H1 (cell line): ENCODE measurements at regions of chr17 and their contacts with region 1.

Region 1: DNA sequence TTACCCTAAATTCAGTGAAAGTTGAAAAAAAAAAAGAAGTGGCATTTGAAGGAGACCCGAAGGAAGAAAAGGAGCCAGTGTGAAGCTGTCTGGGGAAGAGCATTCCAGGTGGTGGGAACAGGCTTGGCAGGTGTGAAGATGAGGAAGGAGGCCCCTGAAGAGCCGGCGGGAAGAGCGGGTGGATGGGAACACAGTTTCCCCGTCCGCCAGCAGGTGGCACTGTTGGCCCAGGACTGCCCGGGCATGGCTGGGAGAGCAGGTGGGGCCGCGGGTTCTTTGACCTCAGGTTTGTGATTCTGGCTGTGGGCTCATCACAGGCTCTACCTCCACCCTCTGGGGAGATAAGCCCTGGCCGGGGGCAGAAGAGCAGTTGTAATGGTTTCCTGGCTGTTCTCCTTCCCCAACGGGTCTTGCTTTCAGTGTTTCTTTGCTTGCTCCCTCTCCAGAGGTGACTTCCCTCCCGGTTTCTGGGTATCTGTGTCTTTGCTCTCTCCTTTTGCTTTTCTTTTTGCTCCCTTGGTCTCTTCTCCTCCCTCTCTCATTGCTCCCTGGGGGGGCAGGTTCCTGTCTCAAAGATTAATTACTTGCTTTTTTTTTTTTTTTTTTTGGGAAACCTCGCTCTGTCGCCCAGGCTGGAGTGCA is 32.3 kb downstream of the RAP1GAP2 start:
- DNase-seq: peak; percentile 81 to 99
- H3K4me3 ChIP-seq: no peak overlapping the region
- H3K27ac ChIP-seq: no peak overlapping the region
- H3K4me1 ChIP-seq: peaks cover 0 to 3% (median 1%) of the 10 kb centered on the region in 4 experiments; a peak in 5 of 7 replicates
- H3K27me3 ChIP-seq: no peaks in the 10 kb centered on the region
- CTCF ChIP-seq: peak; percentile 96 to 98 (median 97)
- EP300 ChIP-seq: peak in 1 of 2 experiments; percentile 60; a peak in 1 of 3 replicates
- POLR2A ChIP-seq: no peak
- RAD21 ChIP-seq: peak; percentile 97 to 98

Region 2: DNA sequence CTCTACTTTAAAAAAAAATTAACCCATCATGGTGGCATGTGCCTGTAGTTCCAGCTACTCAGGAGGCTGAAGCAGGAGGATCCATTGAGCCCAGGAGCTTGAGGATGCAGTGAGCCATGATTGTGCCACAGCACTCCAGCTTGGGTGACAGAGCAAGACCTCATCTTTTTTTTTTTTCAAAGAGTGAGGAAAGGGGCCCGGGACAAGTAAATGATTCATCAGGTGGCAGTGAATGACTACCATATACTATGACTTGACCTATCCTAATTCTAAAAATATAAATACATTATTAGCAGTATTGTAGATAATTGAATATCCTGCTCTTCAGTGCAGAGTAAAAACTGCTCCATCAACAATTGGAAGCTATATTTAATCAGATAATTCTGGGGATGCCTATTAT is 172.2 kb before region 1 on chr17:
- CTCF ChIA-PET with region 1: no interaction called
- POLR2A ChIA-PET with region 1: no interaction called
- DNase-seq: no peak
- H3K4me3 ChIP-seq: no peak overlapping the region
- H3K27ac ChIP-seq: no peak overlapping the region
- H3K4me1 ChIP-seq: no peaks in the 10 kb centered on the region
- H3K27me3 ChIP-seq: no peaks in the 10 kb centered on the region
- CTCF ChIP-seq: no peak
- EP300 ChIP-seq: no peak
- POLR2A ChIP-seq: no peak
- RAD21 ChIP-seq: no peak

Region 3: DNA sequence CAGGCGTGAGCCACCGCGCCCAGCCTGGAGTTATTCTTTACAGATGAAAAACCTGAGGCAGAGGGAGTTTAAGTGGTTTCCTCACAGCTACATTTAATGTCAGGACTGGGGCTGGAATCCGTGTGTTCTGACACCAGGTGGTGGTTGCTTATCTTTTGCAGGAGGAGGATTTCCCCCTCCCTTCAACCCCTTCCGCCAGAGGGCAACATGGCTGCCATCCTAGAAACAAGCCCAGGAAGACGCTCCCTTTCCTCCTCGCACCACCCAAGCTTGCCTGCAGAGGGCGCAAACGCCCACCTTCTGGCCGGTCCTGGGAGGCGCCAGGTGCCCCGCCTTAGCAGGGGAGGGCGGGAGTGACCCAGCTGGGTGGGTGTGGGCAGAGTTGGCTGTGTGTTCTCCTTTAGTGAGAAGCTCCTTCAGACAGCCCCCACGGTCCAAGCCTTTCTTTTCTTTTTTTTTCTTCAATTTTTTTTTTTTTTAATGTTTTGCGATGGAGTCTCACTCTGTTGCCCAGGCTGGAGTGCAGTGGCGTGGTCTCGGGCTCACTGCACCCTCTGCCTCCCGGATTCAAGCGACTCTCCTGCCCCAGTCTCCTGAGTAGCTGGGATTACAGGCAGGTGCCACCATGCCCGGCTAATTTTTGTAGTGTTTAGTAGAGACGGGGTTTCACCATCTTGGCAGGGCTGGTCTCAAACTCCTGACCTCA is 42.2 kb before region 1 on chr17:
- CTCF ChIA-PET with region 1: interaction called, 17 read pairs
- POLR2A ChIA-PET with region 1: no interaction called
- DNase-seq: peak; percentile 92 to 100
- H3K4me3 ChIP-seq: no peak overlapping the region
- H3K27ac ChIP-seq: no peak overlapping the region
- H3K4me1 ChIP-seq: no peaks in the 10 kb centered on the region; a peak in 1 of 7 replicates
- H3K27me3 ChIP-seq: no peaks in the 10 kb centered on the region
- CTCF ChIP-seq: peak; percentile 93 to 99 (median 98)
- EP300 ChIP-seq: no peak; a peak in 1 of 3 replicates
- POLR2A ChIP-seq: no peak
- RAD21 ChIP-seq: peak; percentile 78 to 87

Region 4: GRCh38 chr17:2796164-2797125 is 32.1 kb before region 1 on chr17 and contains the start of gene RAP1GAP2:
- CTCF ChIA-PET with region 1: interaction called, 15 read pairs
- POLR2A ChIA-PET with region 1: no interaction called
- DNase-seq: no peak
- H3K4me3 ChIP-seq: no peak within 1 kb of the TSS
- H3K27ac ChIP-seq: no peak within 1 kb of the TSS
- H3K4me1 ChIP-seq: peaks cover 0 to 8% (median 4%) of the 10 kb centered on the region in 4 experiments; a peak in 4 of 7 replicates
- H3K27me3 ChIP-seq: no peaks in the 10 kb centered on the region
- CTCF ChIP-seq: no peak
- EP300 ChIP-seq: no peak
- POLR2A ChIP-seq: no peak
- RAD21 ChIP-seq: no peak
- total RNA-seq, gene RAP1GAP2: 63.4 and 63.8 TPM in 2 replicates

Region 5: DNA sequence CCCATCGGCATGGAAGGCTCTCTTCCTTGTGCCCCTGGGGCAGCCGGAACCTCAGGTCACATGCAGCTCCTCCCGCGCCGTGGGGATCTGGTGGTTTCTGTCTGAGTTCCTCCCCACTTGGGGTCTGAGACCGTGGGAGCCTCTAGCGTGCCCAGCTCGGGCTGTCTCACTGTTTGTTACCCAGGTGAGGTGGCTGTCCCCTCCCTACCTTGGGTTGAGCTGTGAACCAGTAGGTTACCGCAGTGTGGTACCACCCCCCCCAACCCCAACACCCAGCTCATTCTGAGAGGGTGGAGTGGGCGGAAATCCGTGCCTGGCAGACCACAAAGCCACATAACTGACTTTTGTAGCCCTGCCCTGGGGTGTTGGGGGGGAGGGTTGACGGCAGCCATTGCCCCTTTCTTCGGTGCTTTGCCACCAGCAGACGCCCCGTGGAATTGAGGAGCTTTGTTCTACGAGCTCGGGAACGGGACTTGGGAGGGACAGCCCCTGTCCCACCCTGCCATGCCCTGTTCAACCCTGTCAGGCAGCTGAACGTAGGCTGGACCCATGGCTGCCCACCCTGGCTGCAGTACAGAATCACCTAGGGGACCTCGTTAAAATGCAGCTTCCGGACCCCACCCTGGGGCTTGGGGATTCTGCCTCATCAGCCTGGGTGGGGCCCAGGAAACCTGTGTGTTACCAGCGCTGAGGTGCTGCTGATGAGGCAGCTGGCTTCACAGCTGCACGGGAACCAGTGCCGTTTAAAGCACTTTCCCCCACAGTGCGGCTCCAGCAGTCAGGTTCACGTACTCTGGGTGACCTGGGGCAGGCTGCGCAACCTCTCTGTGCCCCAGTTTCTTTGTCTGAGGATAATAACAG is 13.8 kb before region 1 on chr17:
- CTCF ChIA-PET with region 1: interaction called, 13 read pairs
- POLR2A ChIA-PET with region 1: no interaction called
- DNase-seq: no peak
- H3K4me3 ChIP-seq: no peak overlapping the region
- H3K27ac ChIP-seq: no peak overlapping the region
- H3K4me1 ChIP-seq: peaks cover 0 to 13% (median 4%) of the 10 kb centered on the region in 4 experiments; a peak in 6 of 7 replicates
- H3K27me3 ChIP-seq: no peaks in the 10 kb centered on the region
- CTCF ChIP-seq: no peak
- EP300 ChIP-seq: no peak
- POLR2A ChIP-seq: no peak
- RAD21 ChIP-seq: no peak

Region 6: DNA sequence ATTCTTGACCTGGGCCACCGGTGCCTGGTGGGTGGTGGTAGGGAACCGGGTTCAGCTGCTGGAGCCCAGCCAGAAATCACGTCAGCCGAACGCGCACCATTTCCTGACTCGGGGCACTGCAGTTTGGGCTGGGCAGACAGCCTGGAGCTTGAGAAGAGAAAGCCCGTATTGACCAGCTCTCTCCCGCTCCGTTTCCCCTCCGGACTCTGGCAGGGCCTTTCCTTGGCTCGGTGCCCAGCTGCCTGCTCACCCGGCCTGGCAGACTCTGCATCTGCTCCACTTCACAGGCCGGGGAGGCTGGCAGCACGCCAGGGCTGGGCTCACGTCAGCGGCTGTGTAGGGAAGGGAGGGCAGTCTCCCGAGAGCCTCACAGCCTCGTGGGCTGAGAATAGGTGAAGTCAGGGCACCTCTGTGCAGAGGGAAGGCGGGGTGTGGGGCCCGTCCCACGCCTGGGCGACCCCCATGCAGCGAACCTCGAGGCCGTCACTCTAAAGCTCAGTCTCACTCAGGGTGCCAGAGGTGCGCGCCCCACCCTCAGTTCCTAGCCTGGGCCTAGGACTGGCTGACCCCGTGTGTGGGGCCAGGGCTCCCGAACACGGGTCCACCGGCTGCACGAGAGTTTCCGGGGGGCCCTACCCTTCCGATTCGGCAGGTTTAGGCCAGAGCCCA is 175.7 kb after region 1 on chr17:
- CTCF ChIA-PET with region 1: interaction called, 18 read pairs
- POLR2A ChIA-PET with region 1: no interaction called
- DNase-seq: no peak
- H3K4me3 ChIP-seq: no peak overlapping the region
- H3K27ac ChIP-seq: no peak overlapping the region
- H3K4me1 ChIP-seq: no peaks in the 10 kb centered on the region
- H3K27me3 ChIP-seq: no peaks in the 10 kb centered on the region
- CTCF ChIP-seq: no peak
- EP300 ChIP-seq: no peak
- POLR2A ChIP-seq: no peak
- RAD21 ChIP-seq: no peak

Region 7: GRCh38 chr17:3012926-3013581 is 184.5 kb after region 1 on chr17:
- CTCF ChIA-PET with region 1: interaction called, 81 read pairs
- POLR2A ChIA-PET with region 1: no interaction called
- DNase-seq: peak; percentile 62 to 82
- H3K4me3 ChIP-seq: no peak overlapping the region
- H3K27ac ChIP-seq: no peak overlapping the region
- H3K4me1 ChIP-seq: no peaks in the 10 kb centered on the region
- H3K27me3 ChIP-seq: no peaks in the 10 kb centered on the region
- CTCF ChIP-seq: peak; percentile 88 to 98 (median 94)
- EP300 ChIP-seq: no peak
- POLR2A ChIP-seq: no peak
- RAD21 ChIP-seq: peak; percentile 97 to 98